Mammary epithelial cell (primary cell): ENCODE measurements at regions of chr20 and their contacts with region 1.

Region 1: DNA sequence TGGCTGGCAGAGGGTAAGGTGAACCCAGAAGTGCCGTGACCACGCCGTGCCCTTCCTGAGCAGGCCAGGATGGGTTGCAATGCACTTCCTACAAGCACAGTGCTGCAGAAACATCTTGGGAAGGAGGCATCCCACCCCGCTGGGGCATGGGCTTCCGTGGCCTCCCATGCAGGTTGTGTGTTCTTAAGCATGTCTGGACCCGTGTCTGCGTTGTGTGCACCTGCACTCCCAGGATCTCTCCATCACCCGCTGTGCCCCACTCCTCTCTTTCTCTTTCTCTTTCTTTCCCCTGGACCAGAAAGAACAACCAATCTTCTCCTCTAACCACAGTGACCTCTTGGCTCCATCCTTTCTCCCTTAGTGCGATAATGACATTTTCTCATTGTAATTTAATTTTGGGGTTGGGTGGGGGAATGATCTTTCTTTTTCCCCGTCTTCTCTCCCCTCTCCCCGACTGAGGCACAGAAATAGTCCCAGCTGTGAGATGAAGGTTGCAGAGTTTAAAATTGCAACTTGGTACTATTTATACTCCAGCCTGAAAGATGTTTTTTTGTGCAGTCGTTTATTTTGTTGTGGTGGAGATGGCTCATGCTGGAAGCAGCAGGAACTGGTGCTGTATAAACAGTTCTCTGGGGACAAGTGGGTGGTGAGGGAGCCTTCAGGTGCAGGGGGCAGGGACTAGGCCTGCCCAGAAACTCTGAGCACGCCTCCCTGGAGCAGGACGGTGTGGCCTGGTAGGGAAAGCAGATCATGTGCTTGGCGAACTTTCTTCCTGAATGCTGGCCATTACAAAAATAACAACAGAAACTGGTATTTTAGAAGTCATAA is 20.5 kb downstream of the BCAS4 start:
- DNase-seq: peak; percentile 59
- H3K4me3 ChIP-seq: no peak overlapping the region
- H3K27ac ChIP-seq: no peak overlapping the region
- H3K4me1 ChIP-seq: peaks cover 7% of the 10 kb centered on the region
- H3K27me3 ChIP-seq: no peaks in the 10 kb centered on the region
- CTCF ChIP-seq: no peak

Region 2: GRCh38 chr20:50784464-50784863 is 30.9 kb before region 1 on chr20:
- CTCF ChIA-PET with region 1: no interaction called
- dilution Hi-C with region 1: no loop called
- in situ Hi-C with region 1: no loop called
- intact Hi-C with region 1: no loop called
- DNase-seq: no peak
- H3K4me3 ChIP-seq: no peak overlapping the region
- H3K27ac ChIP-seq: no peak overlapping the region
- H3K4me1 ChIP-seq: no peaks in the 10 kb centered on the region
- H3K27me3 ChIP-seq: no peaks in the 10 kb centered on the region
- CTCF ChIP-seq: no peak

Region 3: GRCh38 chr20:50837532-50838506 is 22.4 kb after region 1 on chr20:
- CTCF ChIA-PET with region 1: no interaction called
- dilution Hi-C with region 1: no loop called
- in situ Hi-C with region 1: no loop called
- intact Hi-C with region 1: loop called (anchors 1 kb)
- DNase-seq: peak; percentile 89
- H3K4me3 ChIP-seq: no peak overlapping the region
- H3K27ac ChIP-seq: peak overlapping the region; percentile 70
- H3K4me1 ChIP-seq: peaks cover 34% of the 10 kb centered on the region
- H3K27me3 ChIP-seq: no peaks in the 10 kb centered on the region
- CTCF ChIP-seq: no peak

Region 4: GRCh38 chr20:50885781-50886486 is 70.6 kb after region 1 on chr20:
- CTCF ChIA-PET with region 1: interaction called, 5 read pairs
- dilution Hi-C with region 1: no loop called
- in situ Hi-C with region 1: no loop called
- intact Hi-C with region 1: loop called (anchors 2 kb)
- DNase-seq: peak; percentile 15
- H3K4me3 ChIP-seq: no peak overlapping the region
- H3K27ac ChIP-seq: no peak overlapping the region
- H3K4me1 ChIP-seq: no peaks in the 10 kb centered on the region
- H3K27me3 ChIP-seq: no peaks in the 10 kb centered on the region
- CTCF ChIP-seq: no peak

Region 5: GRCh38 chr20:50929299-50930138 is 114.1 kb after region 1 on chr20:
- CTCF ChIA-PET with region 1: interaction called, 13 read pairs
- dilution Hi-C with region 1: no loop called
- in situ Hi-C with region 1: no loop called
- intact Hi-C with region 1: loop called (anchors 1 kb)
- DNase-seq: peak; percentile 87
- H3K4me3 ChIP-seq: peak overlapping the region; percentile 70 to 93 (median 80)
- H3K27ac ChIP-seq: peak overlapping the region; percentile 74
- H3K4me1 ChIP-seq: peaks cover 20% of the 10 kb centered on the region
- H3K27me3 ChIP-seq: no peaks in the 10 kb centered on the region
- CTCF ChIP-seq: peak; percentile 97 to 100

Region 6: DNA sequence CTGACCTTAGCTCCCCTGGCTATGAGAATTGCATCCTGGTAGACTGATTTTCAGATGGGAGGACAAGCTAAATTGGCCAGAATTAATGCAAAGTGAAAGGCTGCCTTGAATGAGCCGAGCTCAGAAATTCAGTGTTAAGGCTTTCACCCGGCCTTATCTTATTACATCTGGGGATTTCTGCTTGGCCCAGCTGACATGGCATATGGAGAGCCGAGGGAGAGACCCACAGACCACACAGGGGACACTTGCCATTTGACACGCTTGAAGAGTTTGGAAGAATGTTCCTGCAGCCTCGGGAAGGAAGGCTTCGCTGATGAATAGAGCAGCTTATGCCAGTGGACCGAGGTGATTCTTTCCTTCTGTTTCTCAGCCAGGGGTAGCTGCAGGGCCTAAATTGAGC is 152.2 kb after region 1 on chr20:
- CTCF ChIA-PET with region 1: no interaction called
- dilution Hi-C with region 1: loop called (anchors 10 kb)
- in situ Hi-C with region 1: no loop called
- intact Hi-C with region 1: no loop called
- DNase-seq: no peak
- H3K4me3 ChIP-seq: no peak overlapping the region
- H3K27ac ChIP-seq: no peak overlapping the region
- H3K4me1 ChIP-seq: no peaks in the 10 kb centered on the region
- H3K27me3 ChIP-seq: no peaks in the 10 kb centered on the region
- CTCF ChIP-seq: no peak

Region 7: GRCh38 chr20:51326201-51326819 is 510.9 kb after region 1 on chr20:
- CTCF ChIA-PET with region 1: no interaction called
- dilution Hi-C with region 1: no loop called
- in situ Hi-C with region 1: loop called in 1 of 2 experiments (anchors 25 kb)
- intact Hi-C with region 1: no loop called
- DNase-seq: no peak
- H3K4me3 ChIP-seq: no peak overlapping the region
- H3K27ac ChIP-seq: no peak overlapping the region
- H3K4me1 ChIP-seq: peaks cover 10% of the 10 kb centered on the region
- H3K27me3 ChIP-seq: no peaks in the 10 kb centered on the region
- CTCF ChIP-seq: peak; percentile 55 to 72